ENCODE measurements at regions of chr2 and their contacts with region 1.

Region 1: GRCh38 chr2:227471924-227472264 is at the start of gene AGFG1:
- DNase-seq: peak; percentile 73 to 92 (median 84)
- ATAC-seq: peak; percentile 85
- H3K4me3 ChIP-seq: peak within 1 kb of the TSS; percentile 65 to 80
- H3K4me3 Mint-ChIP-seq: peak within 1 kb of the TSS; percentile 95
- H3K27ac ChIP-seq: peak within 1 kb of the TSS; percentile 28 to 57
- H3K27ac Mint-ChIP-seq: peak within 1 kb of the TSS; percentile 93
- H3K4me1 ChIP-seq: peaks cover 49% of the 10 kb centered on the region
- H3K4me1 Mint-ChIP-seq: peaks cover 52% of the 10 kb centered on the region
- H3K27me3 ChIP-seq: no peaks in the 10 kb centered on the region
- H3K27me3 Mint-ChIP-seq: no peaks in the 10 kb centered on the region
- CTCF ChIP-seq: peak; percentile 90
- total RNA-seq, gene AGFG1: 51.0 to 56.0 TPM

Region 2: GRCh38 chr2:226247289-226248275 is 1224.3 kb before region 1 on chr2:
- CTCF ChIA-PET with region 1: no interaction called
- POLR2A ChIA-PET with region 1: no interaction called
- intact Hi-C with region 1: no loop called
- DNase-seq: no peak
- ATAC-seq: no peak
- H3K4me3 ChIP-seq: no peak overlapping the region
- H3K4me3 Mint-ChIP-seq: no peak overlapping the region
- H3K27ac ChIP-seq: no peak overlapping the region
- H3K27ac Mint-ChIP-seq: no peak overlapping the region
- H3K4me1 ChIP-seq: no peaks in the 10 kb centered on the region
- H3K4me1 Mint-ChIP-seq: no peaks in the 10 kb centered on the region
- H3K27me3 ChIP-seq: no peaks in the 10 kb centered on the region
- H3K27me3 Mint-ChIP-seq: no peaks in the 10 kb centered on the region
- CTCF ChIP-seq: no peak

Region 3: GRCh38 chr2:226835796-226836547 is 635.9 kb before region 1 on chr2 and contains the start of gene RHBDD1:
- CTCF ChIA-PET with region 1: no interaction called
- POLR2A ChIA-PET with region 1: no interaction called
- intact Hi-C with region 1: loop called (anchors 2 to 5 kb)
- DNase-seq: peak; percentile 88 to 98 (median 94)
- ATAC-seq: peak; percentile 82
- H3K4me3 ChIP-seq: peak within 1 kb of the TSS; percentile 64 to 74
- H3K4me3 Mint-ChIP-seq: peak within 1 kb of the TSS; percentile 90
- H3K27ac ChIP-seq: peak within 1 kb of the TSS; percentile 94 to 97
- H3K27ac Mint-ChIP-seq: peak within 1 kb of the TSS; percentile 98
- H3K4me1 ChIP-seq: peaks cover 51% of the 10 kb centered on the region
- H3K4me1 Mint-ChIP-seq: peaks cover 61% of the 10 kb centered on the region
- H3K27me3 ChIP-seq: no peaks in the 10 kb centered on the region
- H3K27me3 Mint-ChIP-seq: no peaks in the 10 kb centered on the region
- CTCF ChIP-seq: no peak
- total RNA-seq, gene RHBDD1: 29.7 to 30.9 TPM

Region 4: GRCh38 chr2:227324995-227325838 is 146.7 kb before region 1 on chr2 and contains the start of gene MFF:
- CTCF ChIA-PET with region 1: no interaction called
- POLR2A ChIA-PET with region 1: no interaction called
- intact Hi-C with region 1: loop called (anchors 5 kb)
- DNase-seq: peak; percentile 86 to 98 (median 93)
- ATAC-seq: peak; percentile 96
- H3K4me3 ChIP-seq: peak within 1 kb of the TSS; percentile 75 to 81
- H3K4me3 Mint-ChIP-seq: peak within 1 kb of the TSS; percentile 95
- H3K27ac ChIP-seq: peak within 1 kb of the TSS; percentile 59 to 80
- H3K27ac Mint-ChIP-seq: peak within 1 kb of the TSS; percentile 91
- H3K4me1 ChIP-seq: peaks cover 25% of the 10 kb centered on the region
- H3K4me1 Mint-ChIP-seq: peaks cover 56% of the 10 kb centered on the region
- H3K27me3 ChIP-seq: no peaks in the 10 kb centered on the region
- H3K27me3 Mint-ChIP-seq: no peaks in the 10 kb centered on the region
- CTCF ChIP-seq: no peak
- total RNA-seq, gene MFF: 48.6 to 50.3 TPM

Region 5: GRCh38 chr2:227406177-227407031 is 65.5 kb before region 1 on chr2:
- CTCF ChIA-PET with region 1: no interaction called
- POLR2A ChIA-PET with region 1: no interaction called
- intact Hi-C with region 1: loop called in 1 of 2 experiments (anchors 10 kb)
- DNase-seq: peak in 1 of 9 experiments; percentile 18
- ATAC-seq: no peak
- H3K4me3 ChIP-seq: no peak overlapping the region
- H3K4me3 Mint-ChIP-seq: no peak overlapping the region
- H3K27ac ChIP-seq: no peak overlapping the region
- H3K27ac Mint-ChIP-seq: peak overlapping the region; percentile 61
- H3K4me1 ChIP-seq: peaks cover 35% of the 10 kb centered on the region
- H3K4me1 Mint-ChIP-seq: peaks cover 37% of the 10 kb centered on the region
- H3K27me3 ChIP-seq: no peaks in the 10 kb centered on the region
- H3K27me3 Mint-ChIP-seq: no peaks in the 10 kb centered on the region
- CTCF ChIP-seq: no peak

Region 6: GRCh38 chr2:227528803-227529202 is 56.9 kb after region 1 on chr2:
- CTCF ChIA-PET with region 1: no interaction called
- POLR2A ChIA-PET with region 1: no interaction called
- intact Hi-C with region 1: loop called in 1 of 2 experiments (anchors 10 kb)
- DNase-seq: no peak
- ATAC-seq: no peak
- H3K4me3 ChIP-seq: no peak overlapping the region
- H3K4me3 Mint-ChIP-seq: no peak overlapping the region
- H3K27ac ChIP-seq: no peak overlapping the region
- H3K27ac Mint-ChIP-seq: no peak overlapping the region
- H3K4me1 ChIP-seq: no peaks in the 10 kb centered on the region
- H3K4me1 Mint-ChIP-seq: peaks cover 9% of the 10 kb centered on the region
- H3K27me3 ChIP-seq: no peaks in the 10 kb centered on the region
- H3K27me3 Mint-ChIP-seq: no peaks in the 10 kb centered on the region
- CTCF ChIP-seq: no peak

Region 7: GRCh38 chr2:227545990-227546389 is 74.1 kb after region 1 on chr2:
- CTCF ChIA-PET with region 1: no interaction called
- POLR2A ChIA-PET with region 1: no interaction called
- intact Hi-C with region 1: loop called in 1 of 2 experiments (anchors 5 kb)
- DNase-seq: peak in 3 of 9 experiments; percentile 7 to 31 (median 13)
- ATAC-seq: no peak
- H3K4me3 ChIP-seq: no peak overlapping the region
- H3K4me3 Mint-ChIP-seq: no peak overlapping the region
- H3K27ac ChIP-seq: no peak overlapping the region
- H3K27ac Mint-ChIP-seq: no peak overlapping the region
- H3K4me1 ChIP-seq: no peaks in the 10 kb centered on the region
- H3K4me1 Mint-ChIP-seq: peaks cover 3% of the 10 kb centered on the region
- H3K27me3 ChIP-seq: no peaks in the 10 kb centered on the region
- H3K27me3 Mint-ChIP-seq: no peaks in the 10 kb centered on the region
- CTCF ChIP-seq: no peak

Region 8: GRCh38 chr2:227766373-227766883 is 294.5 kb after region 1 on chr2:
- CTCF ChIA-PET with region 1: interaction called, 5 read pairs
- POLR2A ChIA-PET with region 1: no interaction called
- intact Hi-C with region 1: loop called in 1 of 2 experiments (anchors 2 kb)
- DNase-seq: peak; percentile 21 to 73 (median 59)
- ATAC-seq: peak; percentile 64
- H3K4me3 ChIP-seq: no peak overlapping the region
- H3K4me3 Mint-ChIP-seq: no peak overlapping the region
- H3K27ac ChIP-seq: no peak overlapping the region
- H3K27ac Mint-ChIP-seq: no peak overlapping the region
- H3K4me1 ChIP-seq: no peaks in the 10 kb centered on the region
- H3K4me1 Mint-ChIP-seq: no peaks in the 10 kb centered on the region
- H3K27me3 ChIP-seq: no peaks in the 10 kb centered on the region
- H3K27me3 Mint-ChIP-seq: peaks cover 3% of the 10 kb centered on the region
- CTCF ChIP-seq: peak; percentile 75